Calu3 (cell line): ENCODE measurements at regions of chr16 and their contacts with region 1.

Region 1: GRCh38 chr16:88737298-88738150 is 31.2 kb downstream of the CTU2 start:
- DNase-seq: peak; percentile 75
- H3K4me3 Mint-ChIP-seq: no peak overlapping the region
- H3K27ac Mint-ChIP-seq: no peak overlapping the region
- H3K4me1 Mint-ChIP-seq: no peaks in the 10 kb centered on the region
- H3K27me3 Mint-ChIP-seq: no peaks in the 10 kb centered on the region
- CTCF ChIP-seq: peak; percentile 99

Region 2: GRCh38 chr16:88747588-88748301 is 10.2 kb after region 1 on chr16:
- CTCF ChIA-PET with region 1: no interaction called
- intact Hi-C with region 1: no loop called
- DNase-seq: peak; percentile 90
- H3K4me3 Mint-ChIP-seq: no peak overlapping the region
- H3K27ac Mint-ChIP-seq: no peak overlapping the region
- H3K4me1 Mint-ChIP-seq: peaks cover 8% of the 10 kb centered on the region
- H3K27me3 Mint-ChIP-seq: no peaks in the 10 kb centered on the region
- CTCF ChIP-seq: peak; percentile 89

Region 3: DNA sequence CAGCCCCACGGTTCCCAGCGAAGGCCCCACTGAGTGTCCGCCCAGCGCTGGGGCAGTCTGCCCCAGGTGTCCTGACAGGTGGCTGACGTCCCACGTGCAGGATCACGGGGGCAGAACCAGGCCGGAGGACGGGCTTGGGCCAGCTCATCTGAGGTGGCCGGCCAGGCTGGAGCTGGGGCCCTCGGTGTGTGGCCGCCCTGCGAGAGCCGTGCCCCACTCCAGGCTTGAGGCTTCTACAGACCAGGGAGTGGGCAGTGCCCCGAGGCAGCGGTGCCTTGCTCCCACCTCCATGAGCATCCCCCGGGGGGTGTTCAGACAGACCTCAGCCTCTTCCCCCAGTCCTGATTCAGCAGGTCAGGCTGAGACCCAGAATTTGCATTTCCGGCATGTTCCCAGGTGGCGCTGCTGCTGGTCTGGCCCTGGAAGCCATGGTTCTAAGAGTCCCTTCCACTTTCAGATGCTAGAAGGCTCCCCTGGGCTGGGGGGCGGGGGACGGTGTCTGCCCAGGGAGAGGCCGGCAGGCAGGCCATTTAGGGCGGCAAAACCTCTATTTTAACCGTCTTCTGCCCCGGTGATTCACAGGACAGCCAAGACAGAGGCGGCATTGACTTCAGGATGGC is 164.3 kb after region 1 on chr16:
- CTCF ChIA-PET with region 1: no interaction called
- intact Hi-C with region 1: no loop called
- DNase-seq: peak; percentile 49
- H3K4me3 Mint-ChIP-seq: no peak overlapping the region
- H3K27ac Mint-ChIP-seq: no peak overlapping the region
- H3K4me1 Mint-ChIP-seq: no peaks in the 10 kb centered on the region
- H3K27me3 Mint-ChIP-seq: peaks cover 86% of the 10 kb centered on the region
- CTCF ChIP-seq: no peak

Region 4: DNA sequence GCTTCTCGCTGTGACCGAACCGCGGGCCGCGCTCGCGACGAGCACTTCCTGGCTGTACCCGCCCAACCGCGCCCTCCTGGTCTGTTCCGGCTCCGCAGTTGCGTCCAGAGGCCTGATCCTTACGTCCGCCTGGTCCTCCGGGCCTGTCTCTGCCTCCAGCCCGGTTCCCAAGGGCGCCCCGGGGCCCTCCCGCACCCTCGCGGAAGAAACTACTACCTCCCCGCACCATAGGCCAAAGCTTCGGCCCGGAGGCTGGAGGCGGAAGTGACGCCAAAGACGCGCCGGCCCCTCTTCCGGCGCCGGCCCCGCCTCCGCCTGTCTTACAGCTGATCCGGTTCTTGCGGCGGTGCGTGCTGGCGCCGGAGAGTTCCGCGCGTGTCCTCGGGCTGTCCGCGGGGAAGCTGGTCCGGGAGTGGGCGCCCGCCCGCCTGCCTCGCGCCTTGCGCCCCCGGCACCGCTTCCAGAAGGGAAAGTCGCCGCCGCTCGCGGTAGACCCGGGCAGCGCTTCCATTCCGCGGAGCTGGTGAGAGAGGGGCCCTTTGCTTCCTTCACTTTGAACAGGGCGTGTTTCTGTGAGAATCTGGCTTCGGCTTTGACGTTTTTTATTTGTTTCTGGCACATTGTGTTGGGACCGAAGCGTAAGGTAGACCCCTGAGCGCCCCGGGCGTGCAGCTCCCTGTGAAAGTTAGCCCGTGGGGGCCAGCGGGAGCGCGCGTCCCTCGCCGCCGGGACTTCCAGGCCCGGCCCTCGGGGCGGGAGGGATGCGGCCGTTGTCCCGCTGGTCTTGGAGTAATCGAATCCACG is 480.1 kb after region 1 on chr16 and contains the start of gene ZNF778:
- CTCF ChIA-PET with region 1: interaction called, 3 read pairs
- intact Hi-C with region 1: loop called (anchors 5 kb)
- DNase-seq: peak; percentile 85
- H3K4me3 Mint-ChIP-seq: peak within 1 kb of the TSS; percentile 98
- H3K27ac Mint-ChIP-seq: peak within 1 kb of the TSS; percentile 87
- H3K4me1 Mint-ChIP-seq: peaks cover 17% of the 10 kb centered on the region
- H3K27me3 Mint-ChIP-seq: no peaks in the 10 kb centered on the region
- CTCF ChIP-seq: no peak
- total RNA-seq, gene ZNF778: 15.3 and 16.6 TPM in 2 replicates